GM23248 (cell line): ENCODE measurements at regions of chr10 and their contacts with region 1.

Region 1: DNA sequence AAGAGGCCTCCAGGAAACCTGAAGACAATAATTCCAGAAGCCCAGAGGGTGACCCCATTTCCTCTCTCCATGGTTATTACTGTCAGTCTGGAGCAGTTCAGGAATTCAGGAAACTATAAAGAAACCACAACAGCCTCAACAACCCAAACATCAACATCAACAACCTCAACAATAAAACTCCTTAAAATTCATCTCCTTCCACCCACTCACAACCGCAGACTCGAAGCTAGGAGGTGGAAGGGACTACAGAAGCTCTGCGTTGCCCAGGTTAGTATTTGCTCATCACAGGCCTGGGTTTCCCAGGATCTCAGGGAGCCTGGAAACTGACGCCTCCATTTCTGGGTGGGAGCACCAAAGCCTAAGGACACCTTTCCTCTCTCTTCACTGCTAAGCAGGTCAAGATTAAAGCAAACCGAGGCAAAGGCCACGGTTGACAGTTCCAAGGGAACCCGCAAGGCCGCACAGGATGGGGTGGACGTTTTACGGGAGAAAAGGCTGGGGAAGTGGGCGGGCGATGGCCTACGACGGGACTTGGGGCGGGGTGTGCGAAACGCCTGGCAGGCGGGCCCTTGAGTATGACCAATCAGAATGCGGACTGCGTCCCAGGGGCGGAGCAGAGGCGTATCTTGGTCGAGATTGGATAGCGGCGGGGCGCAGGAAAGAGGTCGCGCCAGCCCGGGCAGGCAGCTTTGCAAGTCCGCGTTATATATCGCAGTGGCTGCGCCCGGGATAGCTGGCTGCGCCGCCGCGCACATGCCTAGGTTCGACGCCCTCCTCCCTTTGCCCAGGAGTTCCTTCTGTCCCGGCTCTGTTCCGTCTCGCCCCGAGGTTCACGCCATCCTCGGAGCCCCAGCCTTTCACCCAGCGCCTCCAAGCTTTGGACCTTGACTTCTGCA is at the start of gene ELOVL3:
- DNase-seq: peak; percentile 97
- H3K4me3 ChIP-seq: peak within 1 kb of the TSS; percentile 60
- H3K27ac ChIP-seq: peak within 1 kb of the TSS; percentile 82
- H3K4me1 ChIP-seq: peaks cover 16% of the 10 kb centered on the region
- H3K27me3 ChIP-seq: no peaks in the 10 kb centered on the region; the same call in 1 of the 2 replicates
- total RNA-seq, gene ELOVL3: 1.9 TPM in 1 of 2 replicates, not detected in the other

Region 2: GRCh38 chr10:102347241-102347828 is 121.4 kb after region 1 on chr10:
- in situ Hi-C with region 1: loop called (anchors 5 kb)
- DNase-seq: peak; percentile 63
- H3K4me3 ChIP-seq: no peak overlapping the region
- H3K27ac ChIP-seq: no peak overlapping the region
- H3K4me1 ChIP-seq: peaks cover 26% of the 10 kb centered on the region
- H3K27me3 ChIP-seq: no peaks in the 10 kb centered on the region

Region 3: DNA sequence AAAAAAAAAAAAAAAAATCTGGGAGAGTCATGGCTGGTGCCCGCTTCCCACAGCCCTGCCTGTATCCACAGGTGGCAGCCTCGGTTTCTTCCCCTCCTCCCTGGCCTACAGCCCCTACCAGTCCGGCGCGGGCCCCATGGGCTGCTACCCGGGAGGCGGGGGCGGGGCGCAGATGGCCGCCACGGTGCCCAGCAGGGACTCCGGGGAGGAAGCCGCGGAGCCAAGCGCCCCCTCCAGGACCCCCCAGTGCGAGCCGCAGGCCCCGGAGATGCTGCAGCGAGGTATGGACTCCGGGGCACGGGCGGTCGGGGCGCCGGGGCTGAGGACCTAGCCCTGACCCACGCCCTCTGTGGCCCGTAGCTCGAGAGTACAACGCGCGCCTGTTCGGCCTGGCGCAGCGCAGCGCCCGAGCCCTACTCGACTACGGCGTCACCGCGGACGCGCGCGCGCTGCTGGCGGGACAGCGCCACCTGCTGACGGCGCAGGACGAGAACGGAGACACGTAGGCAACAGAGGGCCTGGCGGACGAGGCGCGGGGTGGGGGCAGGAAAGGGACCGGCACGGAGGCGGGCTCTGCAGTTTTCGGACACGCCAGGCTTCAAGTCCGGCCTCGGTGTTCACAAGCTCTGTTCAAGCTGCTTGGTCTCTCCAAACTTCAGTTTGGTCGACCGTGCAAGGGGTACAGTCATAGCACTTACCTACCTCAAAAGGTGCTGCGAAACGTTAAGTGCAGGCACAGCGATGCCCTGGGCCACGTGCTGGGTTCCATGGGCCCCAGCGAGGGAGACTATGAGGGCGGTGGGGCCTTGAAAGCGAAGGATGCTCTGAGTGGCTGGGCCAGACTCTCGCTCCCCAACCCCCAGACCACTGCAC is 173.6 kb after region 1 on chr10:
- in situ Hi-C with region 1: no loop called
- DNase-seq: peak; percentile 93
- H3K4me3 ChIP-seq: peak overlapping the region; percentile 73
- H3K27ac ChIP-seq: peak overlapping the region; percentile 14; the same call in 1 of the 2 replicates
- H3K4me1 ChIP-seq: peaks cover 16% of the 10 kb centered on the region
- H3K27me3 ChIP-seq: no peaks in the 10 kb centered on the region

Region 4: GRCh38 chr10:102450194-102450938 is 224.5 kb after region 1 on chr10:
- in situ Hi-C with region 1: no loop called
- DNase-seq: peak; percentile 89
- H3K4me3 ChIP-seq: peak overlapping the region; percentile 74
- H3K27ac ChIP-seq: no peak overlapping the region
- H3K4me1 ChIP-seq: peaks cover 19% of the 10 kb centered on the region
- H3K27me3 ChIP-seq: no peaks in the 10 kb centered on the region